ENCODE measurements at regions of chr1 and their contacts with region 1.

Region 1: GRCh38 chr1:173429471-173430402 is 47.4 kb upstream of the PRDX6 start:
- DNase-seq: no peak
- ATAC-seq: peak; percentile 92
- H3K4me3 ChIP-seq: no peak overlapping the region
- H3K27ac ChIP-seq: peak overlapping the region; percentile 7
- H3K4me1 ChIP-seq: peaks cover 19% of the 10 kb centered on the region
- H3K27me3 ChIP-seq: no peaks in the 10 kb centered on the region
- CTCF ChIP-seq: peak; percentile 64 to 76 (median 75)
- EP300 ChIP-seq: no peak
- POLR2A ChIP-seq: peak; percentile 17; the same call in 1 of the 2 replicates
- RAD21 ChIP-seq: peak; percentile 46

Region 2: DNA sequence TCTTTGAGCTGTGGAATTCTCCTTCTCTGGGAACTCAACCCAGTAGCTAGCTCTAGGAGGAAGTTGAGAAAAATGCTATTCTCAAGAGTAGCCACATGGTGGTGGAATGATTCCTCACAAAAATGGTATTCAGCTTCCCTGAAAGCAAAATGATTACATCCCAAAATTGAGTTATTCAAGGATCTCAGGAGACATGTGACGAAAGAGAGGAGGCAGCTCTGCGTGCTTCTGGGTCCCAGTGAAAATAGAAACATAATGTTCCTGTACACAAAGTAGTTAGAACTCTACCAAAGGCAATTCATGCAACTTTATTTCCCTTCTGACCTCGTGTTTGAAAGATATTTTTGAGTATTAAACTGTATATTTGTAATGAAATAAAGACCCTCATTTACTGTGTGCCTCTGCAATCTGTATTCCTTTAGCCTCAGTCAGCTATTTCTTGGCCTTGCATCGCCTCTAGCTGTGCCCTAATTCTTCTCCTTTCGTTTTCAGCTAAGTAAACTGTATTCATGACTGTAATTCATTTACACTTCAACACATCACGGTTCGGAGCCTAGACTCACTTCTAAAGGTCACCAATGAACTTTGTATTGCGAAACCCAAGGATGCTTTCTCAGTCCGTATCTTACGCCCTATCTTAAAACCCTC is 603.5 kb before region 1 on chr1:
- CTCF ChIA-PET with region 1: interaction called, 22 read pairs
- POLR2A ChIA-PET with region 1: no interaction called
- RAD21 ChIA-PET with region 1: interaction called, 8 read pairs
- SMC1A ChIA-PET with region 1: interaction called, 20 read pairs
- in situ Hi-C with region 1: no loop called
- intact Hi-C with region 1: no loop called
- DNase-seq: no peak
- ATAC-seq: peak; percentile 65
- H3K4me3 ChIP-seq: no peak overlapping the region
- H3K27ac ChIP-seq: no peak overlapping the region
- H3K4me1 ChIP-seq: peaks cover 4% of the 10 kb centered on the region; the same call in 1 of the 2 replicates
- H3K27me3 ChIP-seq: no peaks in the 10 kb centered on the region
- CTCF ChIP-seq: peak; percentile 47 to 61 (median 51); a peak in 5 of 6 replicates
- EP300 ChIP-seq: no peak
- POLR2A ChIP-seq: no peak
- RAD21 ChIP-seq: peak; percentile 81

Region 3: DNA sequence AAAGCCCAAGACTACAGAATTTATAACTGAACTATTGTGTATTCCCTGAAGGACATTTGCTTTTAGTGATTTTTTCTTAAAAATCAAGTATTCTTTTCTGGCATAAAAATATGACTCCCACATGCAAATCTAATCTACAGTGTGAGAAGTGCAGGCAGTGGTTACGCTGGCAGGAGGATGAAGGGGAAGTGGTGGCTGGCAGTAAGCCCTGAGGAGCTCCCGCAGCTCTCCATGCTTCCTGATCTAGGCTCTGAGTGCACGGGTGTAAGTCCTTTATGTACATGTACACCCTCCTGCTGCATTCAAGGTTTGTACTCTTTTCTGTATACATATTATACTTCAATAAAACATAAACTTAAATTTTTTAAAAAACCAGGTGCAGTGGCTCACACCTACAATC is 20.1 kb before region 1 on chr1:
- CTCF ChIA-PET with region 1: interaction called, 15 read pairs
- POLR2A ChIA-PET with region 1: no interaction called
- RAD21 ChIA-PET with region 1: interaction called, 12 read pairs
- SMC1A ChIA-PET with region 1: interaction called, 6 read pairs
- in situ Hi-C with region 1: no loop called
- intact Hi-C with region 1: no loop called
- DNase-seq: no peak
- ATAC-seq: peak; percentile 17
- H3K4me3 ChIP-seq: peak overlapping the region; percentile 35; the same call in 1 of the 2 replicates
- H3K27ac ChIP-seq: peak overlapping the region; percentile 98
- H3K4me1 ChIP-seq: peaks cover 65% of the 10 kb centered on the region
- H3K27me3 ChIP-seq: no peaks in the 10 kb centered on the region
- CTCF ChIP-seq: no peak
- EP300 ChIP-seq: peak in 1 of 2 experiments; percentile 29; a peak in 1 of 4 replicates
- POLR2A ChIP-seq: no peak
- RAD21 ChIP-seq: no peak

Region 4: GRCh38 chr1:173507205-173507846 is 77.6 kb after region 1 on chr1:
- CTCF ChIA-PET with region 1: interaction called, 24 read pairs
- POLR2A ChIA-PET with region 1: no interaction called
- RAD21 ChIA-PET with region 1: no interaction called
- SMC1A ChIA-PET with region 1: interaction called, 18 read pairs
- in situ Hi-C with region 1: no loop called
- intact Hi-C with region 1: loop called (anchors 5 kb)
- DNase-seq: no peak
- ATAC-seq: no peak; the same call in 1 of the 3 replicates
- H3K4me3 ChIP-seq: no peak overlapping the region
- H3K27ac ChIP-seq: no peak overlapping the region
- H3K4me1 ChIP-seq: no peaks in the 10 kb centered on the region
- H3K27me3 ChIP-seq: no peaks in the 10 kb centered on the region
- CTCF ChIP-seq: no peak
- EP300 ChIP-seq: no peak
- POLR2A ChIP-seq: no peak
- RAD21 ChIP-seq: no peak

Region 5: GRCh38 chr1:173862769-173863223 is 433.1 kb after region 1 on chr1:
- CTCF ChIA-PET with region 1: interaction called, 15 read pairs
- POLR2A ChIA-PET with region 1: no interaction called
- RAD21 ChIA-PET with region 1: interaction called, 3 read pairs
- SMC1A ChIA-PET with region 1: interaction called, 5 read pairs
- in situ Hi-C with region 1: no loop called
- intact Hi-C with region 1: no loop called
- DNase-seq: no peak
- ATAC-seq: peak; percentile 9; the same call in 2 of the 3 replicates
- H3K4me3 ChIP-seq: peak overlapping the region; percentile 81; the same call in 1 of the 2 replicates
- H3K27ac ChIP-seq: peak overlapping the region; percentile 25; the same call in 1 of the 2 replicates
- H3K4me1 ChIP-seq: peaks cover 4% of the 10 kb centered on the region; the same call in 1 of the 2 replicates
- H3K27me3 ChIP-seq: no peaks in the 10 kb centered on the region
- CTCF ChIP-seq: no peak
- EP300 ChIP-seq: no peak
- POLR2A ChIP-seq: no peak
- RAD21 ChIP-seq: no peak

Region 6: GRCh38 chr1:174074757-174075156 is 645.0 kb after region 1 on chr1:
- CTCF ChIA-PET with region 1: interaction called, 3 read pairs
- POLR2A ChIA-PET with region 1: no interaction called
- RAD21 ChIA-PET with region 1: interaction called, 3 read pairs
- SMC1A ChIA-PET with region 1: interaction called, 3 read pairs
- in situ Hi-C with region 1: loop called (anchors 10 kb)
- intact Hi-C with region 1: loop called (anchors 5 kb)
- DNase-seq: no peak
- ATAC-seq: no peak
- H3K4me3 ChIP-seq: no peak overlapping the region
- H3K27ac ChIP-seq: no peak overlapping the region
- H3K4me1 ChIP-seq: no peaks in the 10 kb centered on the region
- H3K27me3 ChIP-seq: no peaks in the 10 kb centered on the region
- CTCF ChIP-seq: peak in 1 of 3 experiments; percentile 11; a peak in 3 of 6 replicates
- EP300 ChIP-seq: no peak
- POLR2A ChIP-seq: no peak
- RAD21 ChIP-seq: peak; percentile 60